Thyroid gland (tissue), 4 donors: ENCODE measurements at regions of chr19 and their contacts with region 1.

Region 1: GRCh38 chr19:41310033-41310758 is at the start of gene CCDC97:
- DNase-seq: peak; percentile 84 to 86
- H3K4me3 ChIP-seq: peak within 1 kb of the TSS; percentile 51 to 66 (median 56)
- H3K27ac ChIP-seq: peak within 1 kb of the TSS; percentile 91 to 95 (median 94)
- H3K4me1 ChIP-seq: peaks cover 23 to 32% of the 10 kb centered on the region in 2 donors
- H3K27me3 ChIP-seq: no peaks in the 10 kb centered on the region
- CTCF ChIP-seq: no peak
- POLR2A ChIP-seq: peak in 1 of 2 donors; percentile 69
- total RNA-seq, gene CCDC97: 10.6 to 22.0 (median 19.3) TPM

Region 2: GRCh38 chr19:41263850-41264580 is 46.2 kb before region 1 on chr19 and contains the start of gene HNRNPUL1:
- intact Hi-C with region 1: loop called (anchors 5 kb)
- DNase-seq: peak; percentile 99
- H3K4me3 ChIP-seq: peak within 1 kb of the TSS; percentile 80 to 98 (median 96)
- H3K27ac ChIP-seq: peak within 1 kb of the TSS; percentile 98 to 99 (median 98)
- H3K4me1 ChIP-seq: peaks cover 13 to 22% of the 10 kb centered on the region in 2 donors
- H3K27me3 ChIP-seq: no peaks in the 10 kb centered on the region
- CTCF ChIP-seq: peak in 1 of 6 experiments; percentile 15
- POLR2A ChIP-seq: peak in 1 of 2 donors; percentile 52
- total RNA-seq, gene HNRNPUL1: 129 to 180 (median 150) TPM

Region 3: DNA sequence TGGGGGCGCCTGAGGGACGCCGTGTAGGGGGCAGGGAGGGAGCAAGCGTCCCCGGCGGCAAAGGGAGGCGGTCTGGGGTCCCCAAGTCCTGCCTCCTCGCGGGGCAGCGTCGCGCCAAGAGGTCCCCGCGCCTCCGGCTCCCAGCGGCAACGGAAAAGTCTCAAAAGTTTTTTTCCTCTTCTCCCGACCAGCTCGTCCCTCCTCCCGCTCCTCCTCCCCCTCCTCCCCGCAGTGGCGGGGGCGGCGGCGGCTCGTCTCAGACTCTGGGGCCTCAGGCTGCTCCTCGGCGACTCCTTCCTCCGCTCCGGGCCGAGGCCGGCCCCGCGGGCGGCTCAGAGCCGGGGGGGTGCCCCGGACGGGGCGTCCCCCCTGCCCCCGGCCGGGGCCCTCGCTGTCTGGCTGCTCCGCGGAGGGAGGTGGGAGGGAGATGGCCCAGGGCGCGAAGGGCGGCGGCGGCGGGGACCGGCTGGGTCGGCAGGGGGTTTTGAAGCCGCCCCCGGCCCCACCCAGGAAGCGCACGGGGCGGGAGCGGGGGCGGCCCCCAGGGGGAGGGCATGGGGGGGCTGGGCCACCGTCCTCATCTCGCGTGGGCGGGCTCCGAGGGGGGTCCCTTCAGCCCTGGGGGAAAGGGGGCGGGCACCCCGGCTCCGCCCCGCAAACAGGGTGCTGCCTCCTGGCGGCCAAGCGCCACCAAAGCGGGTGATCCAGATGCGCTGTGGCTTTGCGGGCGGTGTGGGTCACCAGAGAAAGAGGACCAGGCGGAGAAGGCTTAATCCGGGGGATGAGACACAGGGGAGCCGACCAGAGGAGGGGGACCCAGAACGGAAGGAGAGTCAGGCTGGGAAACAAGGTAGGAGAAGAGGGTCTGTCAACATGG is 43.5 kb after region 1 on chr19 and contains the start of gene TGFB1:
- intact Hi-C with region 1: loop called (anchors 5 kb)
- DNase-seq: peak; percentile 70
- H3K4me3 ChIP-seq: peak within 1 kb of the TSS; percentile 20 to 45 (median 33)
- H3K27ac ChIP-seq: peak within 1 kb of the TSS; percentile 66 to 78 (median 70)
- H3K4me1 ChIP-seq: peaks cover 18 to 21% of the 10 kb centered on the region in 2 donors
- H3K27me3 ChIP-seq: peaks cover 3% of the 10 kb centered on the region
- CTCF ChIP-seq: peak; percentile 53 to 84 (median 68)
- POLR2A ChIP-seq: peak in 1 of 2 donors; percentile 21
- total RNA-seq, gene TGFB1: 9.6 to 13.7 (median 11.0) TPM